ENCODE measurements at regions of chr1 and their contacts with region 1.

Region 1: GRCh38 chr1:182829285-182829932 is 9.7 kb upstream of the DHX9 start:
- DNase-seq: no peak
- ATAC-seq: no peak
- H3K4me3 Mint-ChIP-seq: no peak overlapping the region
- H3K27ac Mint-ChIP-seq: no peak overlapping the region
- H3K4me1 Mint-ChIP-seq: no peaks in the 10 kb centered on the region
- H3K27me3 Mint-ChIP-seq: no peaks in the 10 kb centered on the region
- CTCF ChIP-seq: no peak

Region 2: GRCh38 chr1:182768963-182769362 is 60.4 kb before region 1 on chr1:
- CTCF ChIA-PET with region 1: no interaction called
- POLR2A ChIA-PET with region 1: no interaction called
- intact Hi-C with region 1: no loop called
- DNase-seq: no peak
- ATAC-seq: no peak
- H3K4me3 Mint-ChIP-seq: no peak overlapping the region
- H3K27ac Mint-ChIP-seq: no peak overlapping the region
- H3K4me1 Mint-ChIP-seq: no peaks in the 10 kb centered on the region
- H3K27me3 Mint-ChIP-seq: peaks cover 21% of the 10 kb centered on the region
- CTCF ChIP-seq: no peak

Region 3: DNA sequence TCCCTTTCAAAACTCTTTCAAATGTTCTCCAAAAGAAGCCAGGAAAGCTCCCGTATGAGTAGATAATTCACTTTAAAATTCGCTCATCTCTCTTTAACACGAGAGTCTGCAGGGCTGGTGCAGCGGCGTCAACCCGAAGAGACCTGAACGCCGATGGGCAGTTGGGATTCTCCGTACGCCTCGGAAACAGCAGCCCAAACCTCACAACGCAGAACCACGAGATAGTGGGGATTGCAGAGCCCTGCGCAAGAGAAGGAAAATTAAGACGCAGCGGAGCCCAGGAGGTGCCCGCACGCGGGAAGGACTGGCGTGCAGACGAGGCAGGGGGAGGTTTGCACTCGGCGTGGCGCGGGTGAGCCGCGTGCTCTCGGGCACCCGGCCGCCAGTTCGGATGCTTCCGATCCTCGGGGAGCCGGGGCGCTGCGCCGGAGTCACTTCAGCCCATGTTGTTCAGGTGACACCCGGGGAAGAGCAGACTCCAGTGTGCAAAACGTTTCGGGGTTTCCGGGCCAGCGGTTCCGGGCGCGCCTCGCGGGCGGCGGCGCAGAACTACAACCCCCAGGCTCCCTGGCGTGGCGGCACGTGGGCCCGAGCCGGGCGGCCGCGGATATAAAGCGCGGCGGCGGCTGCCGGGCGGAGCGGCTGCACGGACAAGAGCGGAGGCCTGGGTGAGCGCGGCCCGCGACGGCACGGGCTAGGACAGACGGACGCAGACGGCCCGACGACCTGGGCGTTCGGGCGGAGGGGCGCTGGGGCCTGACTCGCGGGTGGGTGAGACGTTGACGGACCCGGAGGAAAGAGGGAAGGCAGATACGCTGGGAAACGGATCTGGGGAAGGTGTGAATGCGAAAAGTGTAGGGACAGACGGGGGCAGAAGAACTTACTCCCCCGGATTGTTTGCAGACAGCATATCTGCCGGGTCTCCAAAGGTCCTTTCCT is 40.0 kb before region 1 on chr1 and contains the start of gene NPL:
- CTCF ChIA-PET with region 1: no interaction called
- POLR2A ChIA-PET with region 1: no interaction called
- intact Hi-C with region 1: loop called (anchors 5 kb)
- DNase-seq: peak; percentile 85
- ATAC-seq: peak; percentile 93
- H3K4me3 Mint-ChIP-seq: peak within 1 kb of the TSS; percentile 82
- H3K27ac Mint-ChIP-seq: peak within 1 kb of the TSS; percentile 66
- H3K4me1 Mint-ChIP-seq: peaks cover 13% of the 10 kb centered on the region
- H3K27me3 Mint-ChIP-seq: peaks cover 10% of the 10 kb centered on the region
- CTCF ChIP-seq: no peak
- total RNA-seq, gene NPL: 4.5 to 4.9 TPM

Region 4: DNA sequence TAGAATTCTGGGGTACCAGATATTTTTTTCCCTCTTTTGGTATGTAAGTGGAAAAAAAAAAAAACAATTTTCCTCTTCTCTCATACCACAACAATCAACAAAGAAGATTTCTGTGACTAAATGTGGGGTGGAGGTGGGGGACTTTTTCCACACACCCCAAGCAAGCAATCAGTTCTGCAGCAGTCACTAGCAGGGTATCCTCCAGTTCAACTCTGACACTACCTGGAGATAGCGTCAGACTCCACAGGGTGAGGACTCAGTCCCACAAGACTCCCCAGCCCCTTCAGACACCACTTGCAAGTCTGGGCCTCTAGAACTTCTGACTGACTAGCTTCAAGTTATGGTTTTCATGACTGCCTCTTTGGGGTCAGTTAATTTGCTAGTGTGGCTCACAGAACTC is 16.0 kb after region 1 on chr1:
- CTCF ChIA-PET with region 1: no interaction called
- POLR2A ChIA-PET with region 1: no interaction called
- intact Hi-C with region 1: no loop called
- DNase-seq: peak; percentile 24
- ATAC-seq: peak; percentile 65
- H3K4me3 Mint-ChIP-seq: no peak overlapping the region
- H3K27ac Mint-ChIP-seq: peak overlapping the region; percentile 77
- H3K4me1 Mint-ChIP-seq: peaks cover 88% of the 10 kb centered on the region
- H3K27me3 Mint-ChIP-seq: no peaks in the 10 kb centered on the region
- CTCF ChIP-seq: no peak